Calu3 (cell line): ENCODE measurements at regions of chr4 and their contacts with region 1.

Region 1: GRCh38 chr4:139295206-139295941 is 5.9 kb upstream of the NAA15 start:
- DNase-seq: peak; percentile 95
- H3K4me3 Mint-ChIP-seq: peak overlapping the region; percentile 97
- H3K27ac Mint-ChIP-seq: peak overlapping the region; percentile 87
- H3K4me1 Mint-ChIP-seq: no peaks in the 10 kb centered on the region
- H3K27me3 Mint-ChIP-seq: no peaks in the 10 kb centered on the region
- CTCF ChIP-seq: peak; percentile 85

Region 2: DNA sequence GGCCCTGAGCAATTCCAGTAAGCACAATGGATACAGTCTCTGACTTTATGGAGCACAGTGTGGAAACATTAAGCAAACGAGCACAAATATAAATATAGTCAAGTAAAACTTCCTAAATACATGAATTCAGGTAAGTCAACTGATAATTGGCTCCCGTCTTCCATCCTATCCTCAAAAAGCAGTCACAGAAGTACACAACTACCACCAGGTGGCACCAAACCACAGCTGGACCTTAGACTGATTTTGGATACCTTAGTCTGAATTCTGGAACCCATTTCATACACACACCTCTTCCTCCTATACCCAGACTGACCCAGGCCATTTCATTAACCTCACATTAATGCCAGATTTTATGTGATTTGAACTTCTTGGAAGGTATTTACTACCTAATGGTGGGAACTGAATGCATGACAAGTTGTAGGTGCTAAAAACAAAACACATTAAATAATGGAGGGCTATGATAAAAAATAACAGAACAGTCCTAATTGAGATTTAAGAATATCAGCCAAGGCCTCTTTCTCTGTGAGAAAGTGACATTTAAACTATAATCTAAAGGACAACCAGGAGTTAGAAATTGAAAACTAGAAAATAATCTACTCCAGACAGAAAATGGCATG is 195.9 kb before region 1 on chr4:
- CTCF ChIA-PET with region 1: no interaction called
- intact Hi-C with region 1: loop called (anchors 5 kb)
- DNase-seq: peak; percentile 61
- H3K4me3 Mint-ChIP-seq: no peak overlapping the region
- H3K27ac Mint-ChIP-seq: no peak overlapping the region
- H3K4me1 Mint-ChIP-seq: no peaks in the 10 kb centered on the region
- H3K27me3 Mint-ChIP-seq: no peaks in the 10 kb centered on the region
- CTCF ChIP-seq: no peak

Region 3: GRCh38 chr4:139229534-139230039 is 65.8 kb before region 1 on chr4:
- CTCF ChIA-PET with region 1: no interaction called
- intact Hi-C with region 1: loop called (anchors 1 kb)
- DNase-seq: peak; percentile 8
- H3K4me3 Mint-ChIP-seq: no peak overlapping the region
- H3K27ac Mint-ChIP-seq: no peak overlapping the region
- H3K4me1 Mint-ChIP-seq: no peaks in the 10 kb centered on the region
- H3K27me3 Mint-ChIP-seq: no peaks in the 10 kb centered on the region
- CTCF ChIP-seq: no peak

Region 4: GRCh38 chr4:139282065-139282720 is 13.2 kb before region 1 on chr4:
- CTCF ChIA-PET with region 1: interaction called, 13 read pairs
- intact Hi-C with region 1: no loop called
- DNase-seq: no peak
- H3K4me3 Mint-ChIP-seq: no peak overlapping the region
- H3K27ac Mint-ChIP-seq: no peak overlapping the region
- H3K4me1 Mint-ChIP-seq: no peaks in the 10 kb centered on the region
- H3K27me3 Mint-ChIP-seq: peaks cover 12% of the 10 kb centered on the region
- CTCF ChIP-seq: no peak

Region 5: GRCh38 chr4:139315221-139315675 is 19.9 kb after region 1 on chr4:
- CTCF ChIA-PET with region 1: no interaction called
- intact Hi-C with region 1: no loop called
- DNase-seq: no peak
- H3K4me3 Mint-ChIP-seq: no peak overlapping the region
- H3K27ac Mint-ChIP-seq: no peak overlapping the region
- H3K4me1 Mint-ChIP-seq: peaks cover 24% of the 10 kb centered on the region
- H3K27me3 Mint-ChIP-seq: no peaks in the 10 kb centered on the region
- CTCF ChIP-seq: no peak